H1 (cell line): ENCODE measurements at regions of chr9 and their contacts with region 1.

Region 1: GRCh38 chr9:136093995-136094881 is 851 bp downstream of the NACC2 start:
- DNase-seq: no peak
- H3K4me3 ChIP-seq: peak overlapping the region; percentile 34 to 69 (median 49)
- H3K27ac ChIP-seq: no peak overlapping the region
- H3K4me1 ChIP-seq: peaks cover 0 to 27% (median 15%) of the 10 kb centered on the region in 4 experiments; a peak in 6 of 7 replicates
- H3K27me3 ChIP-seq: peaks cover 2 to 26% (median 23%) of the 10 kb centered on the region in 4 experiments
- CTCF ChIP-seq: no peak
- EP300 ChIP-seq: no peak
- POLR2A ChIP-seq: no peak
- RAD21 ChIP-seq: no peak

Region 2: DNA sequence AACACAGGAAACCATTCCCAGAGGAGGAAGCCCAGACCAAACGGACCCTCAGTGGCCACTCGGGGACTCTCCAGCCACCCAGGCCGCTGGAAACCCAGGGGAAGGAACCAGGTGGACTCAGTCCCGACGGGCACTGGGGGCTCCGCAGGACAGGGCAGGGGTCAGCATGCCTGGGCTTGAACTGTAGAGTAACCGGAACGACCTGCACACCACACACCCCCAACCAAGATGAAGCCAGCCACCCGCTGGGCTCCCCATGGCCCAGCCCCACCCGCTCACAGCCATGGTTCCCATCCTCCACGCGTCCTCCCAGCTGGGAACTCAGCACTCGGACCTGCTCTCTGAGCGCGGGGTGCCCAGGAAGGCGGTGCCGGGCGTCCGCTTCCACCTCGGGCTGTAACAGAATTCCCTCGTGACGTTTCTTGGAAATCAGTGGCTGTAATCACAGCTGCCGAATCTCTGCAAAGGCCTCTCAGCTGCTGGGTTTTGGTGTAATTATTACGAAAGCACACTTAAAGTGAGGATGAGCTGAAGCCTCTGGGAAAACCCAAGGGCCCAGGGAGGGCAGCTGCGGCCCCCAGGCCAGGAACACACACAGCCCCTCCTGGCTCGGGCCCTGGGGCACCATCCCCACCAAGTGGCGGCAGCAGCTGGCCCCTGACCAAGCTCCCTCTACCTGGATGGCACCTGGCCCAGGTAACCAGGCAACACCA is 13.0 kb before region 1 on chr9:
- CTCF ChIA-PET with region 1: interaction called, 12 read pairs
- POLR2A ChIA-PET with region 1: interaction called, 4 read pairs
- DNase-seq: no peak
- H3K4me3 ChIP-seq: no peak overlapping the region
- H3K27ac ChIP-seq: no peak overlapping the region
- H3K4me1 ChIP-seq: peaks cover 0 to under 1% (median under 1%) of the 10 kb centered on the region in 4 experiments; a peak in 1 of 7 replicates
- H3K27me3 ChIP-seq: no peaks in the 10 kb centered on the region
- CTCF ChIP-seq: no peak
- EP300 ChIP-seq: no peak
- POLR2A ChIP-seq: no peak
- RAD21 ChIP-seq: no peak

Region 3: GRCh38 chr9:136151214-136151804 is 57.1 kb after region 1 on chr9:
- CTCF ChIA-PET with region 1: no interaction called
- POLR2A ChIA-PET with region 1: no interaction called
- DNase-seq: peak in 1 of 2 experiments; percentile 64
- H3K4me3 ChIP-seq: peak overlapping the region in 3 of 4 experiments; percentile 2 to 30 (median 19); a peak in 4 of 8 replicates
- H3K27ac ChIP-seq: no peak overlapping the region; the same call in 1 of the 2 replicates
- H3K4me1 ChIP-seq: peaks cover 0 to 32% (median 24%) of the 10 kb centered on the region in 4 experiments; a peak in 6 of 7 replicates
- H3K27me3 ChIP-seq: peaks cover 0 to 4% (median 3%) of the 10 kb centered on the region in 4 experiments; a peak in 4 of 7 replicates
- CTCF ChIP-seq: no peak
- EP300 ChIP-seq: 0 out of 3 replicates have a peak, but pooled peaks of 1 of the 2 experiments have one; percentile 29
- POLR2A ChIP-seq: no peak
- RAD21 ChIP-seq: no peak

Region 4: GRCh38 chr9:136204838-136205706 is 110.8 kb after region 1 on chr9 and contains the start of gene LHX3:
- CTCF ChIA-PET with region 1: no interaction called
- POLR2A ChIA-PET with region 1: no interaction called
- DNase-seq: peak in 1 of 2 experiments; percentile 83
- H3K4me3 ChIP-seq: peak within 1 kb of the TSS in 1 of 4 experiments; percentile 37; a peak in 1 of 8 replicates
- H3K27ac ChIP-seq: no peak within 1 kb of the TSS
- H3K4me1 ChIP-seq: peaks cover 2 to 9% (median 6%) of the 10 kb centered on the region in 4 experiments; a peak in 6 of 7 replicates
- H3K27me3 ChIP-seq: peaks cover 47 to 61% (median 60%) of the 10 kb centered on the region in 4 experiments
- CTCF ChIP-seq: no peak
- EP300 ChIP-seq: no peak
- POLR2A ChIP-seq: no peak
- RAD21 ChIP-seq: no peak
- total RNA-seq, gene LHX3: not detected in 2 replicates